Head of caudate nucleus (tissue), 42 donors: ENCODE measurements at regions of chr9 and their contacts with region 1.

Region 1: DNA sequence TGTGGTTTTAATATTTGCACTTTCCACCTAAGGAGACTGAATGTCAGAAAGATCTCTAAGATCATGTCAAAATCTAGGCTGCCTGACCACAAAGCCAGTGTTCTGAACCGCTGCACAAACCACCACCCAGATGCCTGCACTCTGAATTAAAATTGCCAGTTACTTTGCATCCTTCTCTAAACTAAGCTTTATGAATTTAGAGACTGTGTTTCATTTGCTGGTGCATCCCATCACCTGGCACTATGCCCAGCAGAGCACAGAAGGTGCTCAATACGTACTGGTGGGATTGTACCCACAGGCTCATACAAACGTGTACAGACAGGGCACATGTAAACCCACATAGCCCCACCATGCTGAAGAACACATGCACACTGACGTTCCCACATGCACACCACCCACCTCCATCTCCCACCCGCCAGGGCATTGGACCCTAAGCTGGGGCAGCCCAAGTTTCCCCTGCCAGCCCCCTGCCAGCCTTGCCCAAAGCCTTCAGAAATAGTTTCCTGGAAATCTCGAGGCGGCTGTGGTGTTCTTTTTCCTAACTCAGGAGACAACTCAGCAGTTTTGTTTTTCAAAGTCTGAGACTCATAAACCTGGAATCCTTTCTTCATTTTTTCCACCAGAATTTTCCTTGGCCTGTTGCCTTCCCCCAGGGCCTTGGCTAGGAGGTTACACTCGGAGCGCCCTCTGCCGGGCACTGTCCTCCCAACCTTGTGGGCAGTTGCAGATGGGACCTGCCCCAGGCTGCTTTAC is 9.6 kb upstream of the TRAF1 start:
- DNase-seq: peak; percentile 83 to 98 (median 93)

Region 2: DNA sequence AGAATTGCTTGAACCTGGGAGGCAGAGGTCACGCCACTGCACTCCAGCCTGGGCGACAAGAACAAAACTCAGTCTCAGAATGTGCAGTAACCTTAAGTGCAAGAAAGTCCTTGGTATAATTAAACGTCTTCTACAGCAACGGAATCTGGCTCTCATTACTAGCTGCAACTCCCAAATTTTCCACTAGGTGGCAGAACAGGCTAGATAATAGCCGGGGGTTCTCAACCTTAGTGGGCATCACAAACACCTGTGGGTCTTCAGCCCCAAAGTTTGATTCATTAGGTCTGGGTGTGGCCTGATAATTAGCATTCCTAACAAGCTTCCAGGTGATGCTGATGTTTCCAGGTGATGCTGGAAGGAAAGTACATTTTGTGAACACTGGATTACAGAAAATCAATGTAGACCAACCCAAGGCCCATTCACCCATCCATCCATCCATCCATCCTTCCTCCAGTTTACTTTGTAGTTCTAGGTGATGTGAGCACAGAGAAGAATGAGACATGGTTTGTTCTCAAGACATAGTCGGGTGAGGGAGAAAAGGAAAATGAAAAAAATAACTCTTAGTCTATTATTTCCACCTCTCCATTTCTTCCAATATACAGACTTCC is 180.3 kb before region 1 on chr9:
- intact Hi-C with region 1: loop called (anchors 5 kb)
- DNase-seq: peak in 37 of 42 donors; percentile 28 to 89 (median 69)

Region 3: DNA sequence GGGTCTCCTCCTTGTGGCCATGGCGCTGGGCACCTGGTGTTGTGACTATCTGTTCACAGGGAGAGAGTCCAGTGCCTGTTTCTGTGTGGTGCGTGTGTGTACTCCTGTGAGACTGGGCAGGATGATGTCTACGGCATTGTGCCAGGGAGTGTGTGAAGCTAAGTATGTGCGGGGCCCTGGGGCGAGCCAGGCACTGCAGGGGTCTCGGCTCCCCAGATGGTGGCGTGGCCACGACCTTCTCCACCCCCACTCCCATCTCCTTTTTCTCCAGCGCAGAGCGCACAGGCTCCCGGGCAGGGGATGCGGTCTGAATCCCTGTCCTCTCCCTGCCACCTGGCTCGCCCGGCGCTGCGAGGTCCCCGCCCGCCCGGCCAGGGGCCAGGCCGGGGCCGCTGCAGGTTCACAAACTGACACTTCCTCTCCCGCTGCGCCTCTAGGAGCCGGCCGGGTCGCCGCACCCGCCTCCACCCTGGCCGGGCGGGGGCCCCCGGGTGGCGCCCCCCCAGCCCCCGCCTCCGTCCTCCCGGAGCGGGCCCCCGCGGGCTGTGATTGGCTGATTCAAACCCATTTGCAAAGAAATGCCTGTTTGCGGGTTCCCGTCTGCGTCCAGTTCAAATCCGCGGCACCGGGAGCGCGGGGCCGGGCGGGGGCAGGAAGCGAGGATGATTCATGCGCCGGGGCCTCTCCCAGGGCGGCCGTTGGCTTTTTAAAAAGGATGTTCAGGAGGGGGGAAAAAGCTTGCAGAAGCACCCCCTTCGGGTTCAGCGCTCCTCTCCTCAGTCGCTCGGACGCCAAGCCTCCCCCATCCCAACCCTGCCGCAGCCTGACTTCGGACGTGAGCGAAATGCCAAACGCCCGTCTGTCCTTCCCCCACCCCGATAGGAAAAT is 60.0 kb before region 1 on chr9:
- intact Hi-C with region 1: loop called (anchors 5 kb)
- DNase-seq: peak; percentile 74 to 96 (median 86)